ENCODE measurements at regions of chr17 and their contacts with region 1.

Region 1: DNA sequence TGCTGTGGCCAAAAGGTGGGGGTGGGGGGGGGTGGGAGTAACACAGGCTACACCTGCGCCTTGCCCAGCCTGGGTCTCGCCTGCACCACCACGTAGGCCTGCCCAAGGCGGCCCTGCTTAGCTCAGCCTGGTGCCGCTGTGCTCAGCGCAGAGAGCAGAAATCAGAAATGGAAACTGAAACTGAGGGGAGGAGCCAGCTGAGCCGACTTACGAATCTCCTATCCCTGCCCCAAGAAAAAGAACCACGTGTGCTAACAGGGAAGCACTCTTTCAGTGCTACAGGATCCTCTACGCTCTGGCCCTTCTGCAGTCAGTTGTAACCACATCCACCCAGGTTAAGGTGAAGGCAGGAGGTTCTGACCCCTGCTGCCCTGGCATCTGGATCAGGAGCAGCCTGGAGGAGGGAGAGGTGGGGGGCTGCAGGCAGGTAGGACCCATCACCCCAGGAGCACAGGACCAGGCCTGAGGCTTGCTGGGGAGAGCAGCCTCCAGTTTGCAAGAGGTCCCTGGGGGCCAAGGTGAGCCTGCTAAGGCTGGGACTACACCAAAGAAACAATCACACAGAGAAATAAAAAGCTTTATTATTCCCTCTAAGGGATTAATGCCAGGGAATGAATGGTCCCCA is at the start of gene DHX58:
- DNase-seq: peak; percentile 63 to 81
- ATAC-seq: peak; percentile 53 to 85 (median 73)
- H3K4me3 ChIP-seq: peak within 1 kb of the TSS; percentile 73
- H3K27ac ChIP-seq: peak within 1 kb of the TSS; percentile 85
- H3K4me1 ChIP-seq: peaks cover 21% of the 10 kb centered on the region
- H3K27me3 ChIP-seq: no peaks in the 10 kb centered on the region
- CTCF ChIP-seq: no peak
- total RNA-seq, gene DHX58: 2.0 to 4.2 (median 3.1) TPM

Region 2: DNA sequence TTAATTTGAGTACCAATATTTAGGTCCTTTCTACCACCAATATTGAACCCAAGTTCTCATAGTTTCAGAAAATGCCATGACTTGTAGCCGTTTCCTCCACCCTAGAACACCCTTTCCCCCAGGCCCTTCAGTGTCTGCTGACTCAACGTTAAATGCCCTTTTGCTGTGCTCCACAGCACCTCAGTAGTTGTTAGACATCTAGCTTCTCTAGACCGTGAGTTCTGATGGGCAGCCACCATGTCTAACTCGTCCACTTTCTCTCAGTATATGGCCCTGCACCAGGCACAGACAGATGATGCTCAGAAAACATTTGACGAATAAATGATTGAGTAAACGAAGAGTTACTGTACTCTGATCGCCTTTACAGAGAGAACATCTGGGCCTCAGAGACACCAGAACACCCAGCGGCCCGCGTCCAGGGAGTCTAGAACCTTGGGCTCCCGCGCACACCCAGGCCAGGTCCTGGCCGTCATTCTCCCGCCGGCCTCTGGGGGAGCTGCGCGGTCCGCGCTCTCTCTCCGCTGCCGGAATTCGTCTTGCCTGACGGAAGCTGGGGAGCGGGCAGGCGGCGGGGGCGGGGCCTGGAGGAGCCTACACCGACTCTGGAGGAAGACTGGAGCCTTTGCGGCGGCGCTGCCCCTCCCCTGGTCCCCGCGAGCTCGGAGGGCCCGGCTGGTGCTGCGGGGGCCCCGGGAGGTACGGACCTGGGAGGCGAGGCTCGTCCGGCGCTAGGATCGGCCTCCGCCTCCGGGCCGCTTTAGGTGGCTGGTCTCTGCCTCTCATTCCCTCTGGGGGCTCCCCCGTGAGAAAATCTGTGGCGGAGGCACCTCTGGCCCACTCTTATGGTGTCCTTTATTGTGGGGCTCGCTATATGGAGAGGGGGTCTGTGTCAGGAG is 92.9 kb before region 1 on chr17 and contains the start of gene NKIRAS2:
- intact Hi-C with region 1: loop called (anchors 1 to 2 kb)
- DNase-seq: peak; percentile 94 to 97
- ATAC-seq: peak; percentile 77 to 83 (median 81)
- H3K4me3 ChIP-seq: peak within 1 kb of the TSS; percentile 94
- H3K27ac ChIP-seq: peak within 1 kb of the TSS; percentile 94
- H3K4me1 ChIP-seq: peaks cover 37% of the 10 kb centered on the region
- H3K27me3 ChIP-seq: no peaks in the 10 kb centered on the region
- CTCF ChIP-seq: peak; percentile 93
- total RNA-seq, gene NKIRAS2: 35.0 to 46.8 (median 39.4) TPM

Region 3: DNA sequence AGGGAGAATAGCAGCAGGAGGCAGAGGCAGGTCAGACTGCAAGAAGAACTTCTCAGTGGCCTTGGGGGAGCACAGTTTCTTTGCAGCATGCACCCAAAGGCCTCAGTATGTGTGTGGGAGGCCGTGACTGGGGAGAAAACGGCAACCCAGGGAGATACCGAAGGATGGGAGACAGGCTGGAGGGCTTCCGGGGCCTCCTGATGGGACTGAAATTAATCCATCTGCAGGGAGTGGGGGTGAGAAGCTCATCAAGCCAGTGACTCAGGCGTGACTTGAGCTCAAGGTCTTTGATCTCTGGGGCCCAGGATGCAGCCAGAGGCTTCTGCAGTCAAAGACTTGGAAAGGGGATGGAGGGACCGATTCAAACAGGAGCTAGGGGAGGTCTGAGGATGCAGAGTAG is 57.2 kb before region 1 on chr17:
- intact Hi-C with region 1: no loop called
- DNase-seq: no peak
- ATAC-seq: no peak
- H3K4me3 ChIP-seq: no peak overlapping the region
- H3K27ac ChIP-seq: no peak overlapping the region
- H3K4me1 ChIP-seq: no peaks in the 10 kb centered on the region
- H3K27me3 ChIP-seq: peaks cover 0 to 2% (median 0%) of the 10 kb centered on the region in 3 donors
- CTCF ChIP-seq: no peak

Region 4: GRCh38 chr17:42067351-42068091 is 45.1 kb before region 1 on chr17:
- intact Hi-C with region 1: loop called in 1 of 2 experiments (anchors 5 kb)
- DNase-seq: peak; percentile 65 to 90
- ATAC-seq: peak; percentile 61 to 87 (median 86)
- H3K4me3 ChIP-seq: no peak overlapping the region
- H3K27ac ChIP-seq: peak overlapping the region; percentile 80
- H3K4me1 ChIP-seq: peaks cover 21% of the 10 kb centered on the region
- H3K27me3 ChIP-seq: no peaks in the 10 kb centered on the region
- CTCF ChIP-seq: peak; percentile 96

Region 5: DNA sequence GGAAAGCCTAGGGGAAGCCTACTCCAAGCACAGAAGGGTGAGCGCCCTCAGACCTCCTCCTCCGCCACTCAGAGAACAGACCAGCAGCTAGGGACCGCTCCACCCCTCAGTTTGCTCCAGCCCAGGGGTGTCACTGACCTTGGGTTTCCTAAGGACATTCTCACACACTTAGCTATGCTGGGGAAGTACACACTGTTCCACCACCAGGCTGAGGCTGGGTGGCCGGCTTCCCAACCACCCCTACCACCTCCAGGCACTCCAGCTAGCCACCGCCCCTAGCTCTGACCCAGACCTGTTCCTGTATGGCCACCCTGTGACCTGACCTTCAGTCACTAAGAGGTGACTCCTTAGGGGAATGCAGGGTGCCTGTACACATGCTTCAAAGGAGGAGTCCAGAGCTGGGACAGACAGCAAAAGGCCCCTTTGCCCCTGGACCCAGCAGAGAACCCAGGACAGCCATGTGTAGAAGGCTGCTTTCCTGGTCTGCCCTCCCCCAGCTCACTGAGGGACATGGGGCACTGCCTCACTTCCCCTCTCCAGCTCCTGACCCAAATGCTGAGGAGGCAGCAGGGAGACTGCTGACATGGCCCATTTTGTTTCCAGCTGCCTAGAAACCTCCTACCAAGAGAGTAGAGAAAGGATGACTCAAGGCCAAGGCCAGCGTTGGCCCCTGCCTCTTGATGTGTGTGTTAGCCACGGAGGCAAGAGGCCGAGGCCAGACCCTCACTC is 16.6 kb after region 1 on chr17:
- intact Hi-C with region 1: no loop called
- DNase-seq: no peak
- ATAC-seq: peak in 2 of 4 donors; percentile 5 to 24
- H3K4me3 ChIP-seq: no peak overlapping the region
- H3K27ac ChIP-seq: peak overlapping the region; percentile 59
- H3K4me1 ChIP-seq: peaks cover 46% of the 10 kb centered on the region
- H3K27me3 ChIP-seq: no peaks in the 10 kb centered on the region
- CTCF ChIP-seq: no peak

Measured in psoas muscle (tissue), 8 donors.